Activated CD4-positive, alpha-beta memory T cell treated with anti-CD3 and anti-CD28 coated beads, Interleukin-2, amount 10 ng/mL, durations not matched to agents 7 days and 5 days (primary cell): ENCODE measurements at regions of chr15 and their contacts with region 1.

Region 1: DNA sequence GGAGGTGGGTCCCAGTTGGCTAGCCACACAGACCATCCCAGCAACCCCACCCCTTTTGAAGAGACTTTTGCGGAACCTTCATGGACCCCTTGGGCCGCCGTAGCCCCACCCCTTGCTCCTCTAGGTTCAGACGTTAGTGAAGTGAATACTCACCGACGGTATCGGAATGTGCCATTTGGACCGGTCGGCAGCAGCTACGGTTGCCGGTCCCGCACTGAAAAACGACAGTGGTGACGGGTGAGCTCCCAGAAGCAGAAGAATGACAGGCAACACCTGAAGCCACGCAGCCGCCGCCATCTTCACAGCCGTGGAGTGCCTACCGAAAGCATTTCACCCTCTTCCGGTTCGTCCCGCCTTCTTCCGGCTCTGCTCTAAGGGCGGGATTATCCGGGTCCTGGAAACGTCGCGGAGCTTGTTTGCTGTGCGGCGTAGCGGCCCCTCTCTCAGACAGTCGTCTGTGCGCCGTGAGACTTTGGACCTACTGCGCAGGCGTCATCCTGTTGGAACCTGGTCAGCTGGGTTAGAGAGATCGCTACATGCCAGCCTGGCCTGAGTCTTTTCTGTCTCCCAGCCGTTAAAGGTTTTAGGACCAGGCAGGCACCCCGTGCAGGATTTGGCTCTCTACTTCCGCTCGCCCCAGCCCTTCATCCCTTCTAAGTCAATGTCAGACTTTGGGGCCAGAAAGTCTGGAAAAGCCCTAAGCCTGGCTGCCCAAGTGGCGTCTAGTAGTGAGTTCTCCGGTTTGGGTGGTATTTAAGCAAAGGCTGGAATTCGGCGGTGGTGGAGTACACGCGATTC is at the starts of genes GANC and TMEM87A:
- DNase-seq: peak; percentile 98
- H3K4me3 Mint-ChIP-seq: peak within 1 kb of the TSS; percentile 96
- H3K27ac Mint-ChIP-seq: peak within 1 kb of the TSS; percentile 98
- H3K4me1 Mint-ChIP-seq: peaks cover 43% of the 10 kb centered on the region
- H3K27me3 Mint-ChIP-seq: no peaks in the 10 kb centered on the region
- total RNA-seq, gene GANC: 28.3 to 31.5 TPM
- total RNA-seq, gene TMEM87A: 39.2 to 40.3 TPM

Region 2: DNA sequence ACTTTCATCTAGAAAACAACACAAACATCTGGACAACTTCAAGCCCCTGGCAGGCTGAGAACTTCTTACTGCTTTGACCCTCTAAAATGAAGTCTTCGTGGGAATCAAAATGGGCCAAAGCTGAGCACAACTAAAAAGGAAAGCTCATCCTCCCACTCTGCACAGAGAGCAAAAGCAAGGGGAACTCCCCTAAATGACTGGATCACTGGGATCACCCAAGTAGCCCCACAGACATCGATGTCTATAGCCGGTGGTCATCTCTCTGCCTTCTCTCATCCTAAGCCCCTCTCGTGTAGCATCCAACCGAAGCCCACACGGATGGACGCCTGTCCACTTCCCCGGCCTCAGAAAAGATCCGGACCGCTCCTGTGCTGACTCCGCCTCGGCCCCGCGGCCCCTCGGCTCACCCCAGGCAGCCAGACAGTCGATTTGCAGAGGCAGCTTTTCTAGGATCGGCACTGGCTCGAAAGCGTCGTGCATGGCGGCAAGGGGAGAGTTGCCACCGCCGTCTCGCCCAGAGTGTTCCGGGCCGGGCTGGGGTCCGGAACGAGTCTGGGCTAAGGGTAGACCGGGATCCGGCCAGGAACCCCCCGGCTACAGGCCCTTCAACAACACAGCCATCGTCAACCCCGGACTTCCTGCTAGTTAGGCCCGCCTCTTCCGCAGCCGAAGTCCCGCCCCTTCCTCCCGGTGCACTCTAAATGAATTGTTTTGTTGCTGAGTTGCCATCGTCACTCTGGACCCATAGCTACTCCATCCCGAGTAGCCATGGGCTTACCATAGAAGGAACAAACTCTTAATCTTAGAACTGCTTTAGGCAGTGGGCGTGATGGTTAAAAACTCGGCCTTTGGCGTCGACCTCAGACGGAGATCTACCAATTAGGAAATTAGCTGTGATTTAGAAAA is 65.4 kb before region 1 on chr15 and contains the start of gene VPS39:
- CTCF ChIA-PET with region 1: no interaction called
- POLR2A ChIA-PET with region 1: interaction called, 35 read pairs
- DNase-seq: peak; percentile 86
- H3K4me3 Mint-ChIP-seq: peak within 1 kb of the TSS; percentile 94
- H3K27ac Mint-ChIP-seq: peak within 1 kb of the TSS; percentile 84
- H3K4me1 Mint-ChIP-seq: peaks cover 27% of the 10 kb centered on the region
- H3K27me3 Mint-ChIP-seq: no peaks in the 10 kb centered on the region
- total RNA-seq, gene VPS39: 76.8 to 82.3 TPM

Region 3: DNA sequence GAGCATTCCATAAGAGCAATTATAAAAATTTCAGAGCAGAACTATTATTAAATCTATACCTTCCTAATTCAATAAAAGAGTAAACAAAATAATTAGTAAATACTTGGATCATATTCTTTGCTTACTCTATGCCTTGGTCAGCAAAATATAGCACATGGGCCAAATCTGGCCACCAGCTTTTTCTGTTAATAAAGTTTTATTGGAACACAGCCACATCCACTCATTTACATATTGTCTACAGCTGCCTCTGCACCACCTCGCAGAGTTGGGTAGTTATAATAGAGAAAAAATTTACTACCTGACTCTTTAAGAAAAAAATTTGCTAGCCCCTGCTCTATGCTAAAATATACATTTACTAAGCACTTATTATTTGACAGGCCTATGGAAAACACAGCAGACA is 32.5 kb before region 1 on chr15:
- CTCF ChIA-PET with region 1: no interaction called
- POLR2A ChIA-PET with region 1: interaction called, 10 read pairs
- DNase-seq: no peak
- H3K4me3 Mint-ChIP-seq: no peak overlapping the region
- H3K27ac Mint-ChIP-seq: no peak overlapping the region
- H3K4me1 Mint-ChIP-seq: peaks cover 16% of the 10 kb centered on the region
- H3K27me3 Mint-ChIP-seq: no peaks in the 10 kb centered on the region

Region 4: DNA sequence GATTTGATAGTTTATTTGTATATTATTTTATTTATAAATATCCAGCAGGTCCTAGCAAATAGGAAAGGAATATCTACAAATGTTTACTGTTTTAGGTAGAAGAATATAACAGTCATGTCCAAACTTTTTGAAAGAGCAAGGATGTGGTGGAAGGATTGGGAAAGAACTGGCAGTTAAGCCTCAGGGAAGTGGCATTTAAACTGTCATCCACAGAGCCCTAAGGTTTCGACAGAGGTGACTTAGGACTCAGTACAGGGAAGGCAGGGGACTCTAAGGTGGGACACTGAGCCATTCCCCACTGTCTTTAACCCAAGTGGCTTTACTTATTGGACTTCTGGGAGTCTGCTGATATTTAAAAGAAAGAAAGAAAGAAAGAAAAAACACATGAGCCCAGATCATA is 11.7 kb after region 1 on chr15:
- CTCF ChIA-PET with region 1: no interaction called
- POLR2A ChIA-PET with region 1: interaction called, 19 read pairs
- DNase-seq: no peak
- H3K4me3 Mint-ChIP-seq: no peak overlapping the region
- H3K27ac Mint-ChIP-seq: no peak overlapping the region
- H3K4me1 Mint-ChIP-seq: peaks cover under 1% of the 10 kb centered on the region
- H3K27me3 Mint-ChIP-seq: no peaks in the 10 kb centered on the region

Region 5: GRCh38 chr15:42495361-42496212 is 222.3 kb after region 1 on chr15 and contains the start of gene SNAP23:
- CTCF ChIA-PET with region 1: interaction called, 4 read pairs
- POLR2A ChIA-PET with region 1: interaction called, 14 read pairs
- DNase-seq: peak; percentile 87
- H3K4me3 Mint-ChIP-seq: peak within 1 kb of the TSS; percentile 98
- H3K27ac Mint-ChIP-seq: peak within 1 kb of the TSS; percentile 84
- H3K4me1 Mint-ChIP-seq: peaks cover 64% of the 10 kb centered on the region
- H3K27me3 Mint-ChIP-seq: no peaks in the 10 kb centered on the region
- total RNA-seq, gene SNAP23: 46.0 to 49.1 TPM

Region 6: GRCh38 chr15:42688301-42688700 is 415.0 kb after region 1 on chr15:
- CTCF ChIA-PET with region 1: no interaction called
- POLR2A ChIA-PET with region 1: no interaction called
- DNase-seq: no peak
- H3K4me3 Mint-ChIP-seq: no peak overlapping the region
- H3K27ac Mint-ChIP-seq: no peak overlapping the region
- H3K4me1 Mint-ChIP-seq: peaks cover 17% of the 10 kb centered on the region
- H3K27me3 Mint-ChIP-seq: no peaks in the 10 kb centered on the region